Activated naive CD4-positive, alpha-beta T cell treated with anti-CD3 and anti-CD28 coated beads, Interleukin-2, amount 10 ng/mL, durations not matched to agents 7 days and 5 days (primary cell): ENCODE measurements at regions of chr3 and their contacts with region 1.

Region 1: GRCh38 chr3:107684431-107684925 is 161.7 kb downstream of the BBX start:
- DNase-seq: peak; percentile 36
- H3K4me3 Mint-ChIP-seq: no peak overlapping the region
- H3K27ac Mint-ChIP-seq: no peak overlapping the region
- H3K4me1 Mint-ChIP-seq: peaks cover 22% of the 10 kb centered on the region
- H3K27me3 Mint-ChIP-seq: no peaks in the 10 kb centered on the region

Region 2: DNA sequence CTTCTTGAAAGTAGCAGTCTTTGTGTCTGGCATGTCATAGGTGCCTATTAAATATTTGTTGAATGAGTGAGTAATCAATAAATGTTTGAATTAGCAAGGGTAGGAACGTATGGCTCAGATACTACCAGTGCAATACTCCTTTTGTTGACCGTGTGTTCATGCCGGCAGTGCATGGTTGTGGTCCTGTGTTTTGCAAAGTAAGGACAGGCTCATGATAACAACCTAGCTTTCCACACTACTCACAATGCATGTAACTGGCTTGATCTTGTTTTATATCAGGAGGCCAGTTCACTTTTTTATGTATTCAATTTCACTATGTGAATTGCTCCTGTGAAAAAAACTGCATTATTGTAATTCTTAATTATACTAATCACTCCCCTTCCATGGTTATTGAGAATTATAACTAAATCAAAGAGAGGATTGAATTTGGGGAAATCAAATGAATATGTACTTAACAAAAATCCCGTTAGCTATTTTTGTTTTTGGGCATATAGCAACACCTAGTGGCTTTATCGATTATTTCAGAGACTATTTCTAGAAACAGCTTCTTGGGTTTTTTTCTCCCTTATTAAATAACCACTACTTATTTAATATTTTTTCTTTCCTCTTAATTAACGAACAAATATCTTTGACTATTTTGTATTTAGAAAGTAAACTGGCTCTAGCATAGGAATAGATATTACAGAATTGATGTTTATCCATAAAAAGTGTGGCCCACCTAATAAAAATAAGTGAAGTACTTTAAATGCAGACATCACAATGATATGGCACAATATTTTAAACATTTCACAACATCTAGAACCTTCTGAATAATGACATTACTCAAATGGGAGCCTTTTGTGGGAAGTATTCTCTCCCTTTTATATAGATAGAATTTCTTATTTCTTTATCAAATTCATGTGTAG is 56.8 kb after region 1 on chr3:
- CTCF ChIA-PET with region 1: interaction called, 13 read pairs
- DNase-seq: no peak
- H3K4me3 Mint-ChIP-seq: no peak overlapping the region
- H3K27ac Mint-ChIP-seq: no peak overlapping the region
- H3K4me1 Mint-ChIP-seq: no peaks in the 10 kb centered on the region
- H3K27me3 Mint-ChIP-seq: no peaks in the 10 kb centered on the region